Heart left ventricle (tissue), 16 donors: ENCODE measurements at regions of chr1 and their contacts with region 1.

Region 1: DNA sequence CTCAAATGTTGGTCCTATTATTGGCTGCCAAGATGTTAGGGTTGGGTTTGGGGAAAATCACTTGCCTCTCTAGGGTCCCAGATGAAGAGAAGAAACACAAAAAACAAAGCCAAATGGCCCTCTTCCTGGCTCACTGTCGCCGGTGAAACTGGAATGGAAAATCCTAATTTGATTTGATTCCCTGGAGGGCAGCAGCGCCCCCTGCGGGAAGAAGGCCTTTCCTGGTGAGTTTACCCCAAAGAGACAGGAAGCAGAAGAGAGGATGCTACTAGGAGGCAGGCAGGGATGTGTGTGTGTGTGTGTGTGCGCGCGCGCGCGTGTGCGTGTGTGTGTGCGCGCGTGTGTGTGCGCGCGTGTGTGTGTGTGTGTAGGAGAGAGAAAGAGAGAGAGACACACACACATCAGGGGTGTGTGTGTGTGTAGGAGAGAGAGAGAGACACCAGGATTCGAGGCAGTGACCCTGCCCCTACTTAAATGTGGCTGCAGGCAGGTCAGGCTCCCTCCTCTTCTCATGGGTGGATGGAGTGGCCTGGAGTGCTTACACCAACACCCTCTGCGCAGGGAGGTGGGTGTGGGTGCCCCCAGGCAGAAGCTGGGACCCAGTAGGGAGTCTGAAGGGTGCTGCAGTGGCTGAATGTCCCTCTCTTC is 3.1 kb upstream of the SELENON start:
- DNase-seq: peak; percentile 78 to 91 (median 84)
- ATAC-seq: peak; percentile 20 to 48 (median 38)
- H3K4me3 ChIP-seq: no peak overlapping the region
- H3K27ac ChIP-seq: peak overlapping the region in 7 of 12 donors; percentile 22 to 69 (median 41)
- H3K4me1 ChIP-seq: peaks cover 3 to 48% (median 32%) of the 10 kb centered on the region in 12 donors
- H3K27me3 ChIP-seq: no peaks in the 10 kb centered on the region
- CTCF ChIP-seq: peak; percentile 76 to 85 (median 78)
- POLR2A ChIP-seq: no peak

Region 2: GRCh38 chr1:25425098-25426085 is 371.5 kb before region 1 on chr1:
- intact Hi-C with region 1: loop called in 2 of 10 experiments (anchors 10 kb)
- DNase-seq: no peak
- ATAC-seq: no peak
- H3K4me3 ChIP-seq: no peak overlapping the region
- H3K27ac ChIP-seq: no peak overlapping the region
- H3K4me1 ChIP-seq: peaks cover 0 to 12% (median 5%) of the 10 kb centered on the region in 12 donors
- H3K27me3 ChIP-seq: no peaks in the 10 kb centered on the region
- CTCF ChIP-seq: no peak
- POLR2A ChIP-seq: no peak

Region 3: DNA sequence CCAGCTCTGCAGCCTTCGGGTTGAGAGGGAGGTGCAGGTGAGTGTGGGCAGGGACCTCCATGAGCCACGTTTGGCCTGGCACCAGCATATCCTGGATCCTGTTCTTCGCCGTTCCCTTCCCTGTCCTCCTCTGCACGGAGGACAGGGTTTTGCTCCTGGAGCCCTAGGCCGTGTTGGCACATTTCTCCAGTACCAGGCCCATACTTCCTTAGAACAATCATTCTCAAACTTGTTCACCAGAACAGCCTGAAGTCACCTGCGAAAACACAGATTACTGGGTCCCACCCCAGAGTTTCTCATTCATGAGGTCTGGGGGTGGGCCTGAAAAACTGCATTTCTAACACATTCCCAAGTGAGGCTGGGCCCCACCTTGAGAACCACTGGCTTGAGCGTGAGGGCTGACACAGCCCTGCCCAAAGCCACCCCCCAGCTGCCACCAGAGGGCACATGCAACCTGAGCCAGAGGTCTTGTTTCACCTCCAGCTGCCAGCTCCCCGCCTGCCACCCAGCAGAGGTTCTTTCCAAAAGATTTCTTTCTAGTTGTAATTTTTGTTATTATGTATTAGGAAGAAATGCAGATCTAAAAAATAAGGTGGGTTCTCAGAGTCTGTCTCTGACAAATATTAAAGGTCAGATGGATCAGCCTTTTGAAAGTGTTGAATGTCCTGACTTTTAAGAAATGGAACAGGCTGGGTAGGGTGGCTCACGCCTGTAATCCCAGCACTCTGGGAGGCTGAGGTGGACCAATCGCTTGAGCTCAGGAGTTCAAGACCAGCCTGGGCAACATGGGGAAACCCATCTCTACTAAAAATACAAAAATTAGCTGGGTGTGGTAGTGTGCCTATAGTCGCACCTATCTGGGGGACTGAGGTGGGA is 293.1 kb before region 1 on chr1:
- intact Hi-C with region 1: loop called in 3 of 10 experiments (anchors 5 to 10 kb)
- DNase-seq: peak in 4 of 5 donors; percentile 24 to 65 (median 54)
- ATAC-seq: peak; percentile 62 to 87 (median 85)
- H3K4me3 ChIP-seq: no peak overlapping the region
- H3K27ac ChIP-seq: no peak overlapping the region
- H3K4me1 ChIP-seq: peaks cover 0 to 42% (median 10%) of the 10 kb centered on the region in 12 donors
- H3K27me3 ChIP-seq: no peaks in the 10 kb centered on the region
- CTCF ChIP-seq: peak; percentile 40 to 69 (median 52)
- POLR2A ChIP-seq: no peak

Region 4: DNA sequence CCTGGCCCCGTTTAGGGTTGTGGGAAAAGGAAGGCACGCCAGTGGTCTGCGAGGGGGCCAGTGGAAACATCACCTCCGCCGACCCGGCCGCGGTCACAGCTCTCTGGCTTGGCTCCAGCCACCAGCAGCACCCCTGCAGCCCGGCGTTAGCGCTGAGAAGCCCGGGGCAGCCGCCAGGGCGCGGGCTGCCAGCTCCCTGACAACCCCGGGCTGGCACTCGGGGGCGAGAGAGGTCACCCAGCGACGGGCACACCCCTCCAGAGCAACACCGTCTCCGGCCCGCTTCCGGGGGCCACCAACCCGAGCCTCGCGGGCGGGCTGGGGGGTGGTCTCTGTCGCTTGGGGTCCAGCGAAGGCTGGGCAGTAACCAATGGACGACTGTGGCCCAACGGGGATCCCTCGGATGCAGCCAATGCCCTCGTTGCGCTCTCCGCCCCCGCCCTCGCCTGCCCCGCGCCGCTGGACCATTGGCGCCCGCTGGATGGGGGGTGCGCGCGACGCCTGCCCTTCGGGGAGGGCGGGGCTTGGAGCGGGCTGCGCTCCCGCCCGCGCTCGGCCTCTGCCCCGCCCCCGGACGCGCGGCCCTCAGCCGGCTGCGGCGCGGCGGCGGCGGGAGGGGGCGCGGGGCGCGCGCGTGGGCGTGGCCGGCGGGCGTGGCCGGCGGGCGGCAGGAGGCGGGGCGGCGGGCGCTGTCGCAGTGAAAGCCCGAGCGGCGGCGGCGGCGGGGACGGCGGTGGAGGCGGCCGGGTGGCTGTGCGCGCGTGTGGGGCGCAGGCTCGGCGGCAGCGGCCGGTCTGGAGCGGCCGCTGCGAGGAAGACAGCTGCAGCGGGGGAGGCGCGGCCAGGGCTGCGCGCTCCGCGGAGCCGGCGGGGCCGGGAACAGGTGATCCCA is 180.6 kb before region 1 on chr1 and contains the start of gene MAN1C1:
- intact Hi-C with region 1: loop called in 4 of 10 experiments (anchors 2 to 5 kb)
- DNase-seq: peak; percentile 91 to 95 (median 94)
- ATAC-seq: peak; percentile 90 to 93 (median 92)
- H3K4me3 ChIP-seq: peak within 1 kb of the TSS; percentile 53 to 98 (median 88)
- H3K27ac ChIP-seq: peak within 1 kb of the TSS; percentile 74 to 94 (median 87)
- H3K4me1 ChIP-seq: peaks cover 0 to 53% (median 38%) of the 10 kb centered on the region in 12 donors
- H3K27me3 ChIP-seq: no peaks in the 10 kb centered on the region
- CTCF ChIP-seq: peak; percentile 23 to 66 (median 46)
- POLR2A ChIP-seq: peak in 1 of 2 donors; percentile 64
- total RNA-seq, gene MAN1C1: 10.5 to 25.7 (median 14.8) TPM

Region 5: DNA sequence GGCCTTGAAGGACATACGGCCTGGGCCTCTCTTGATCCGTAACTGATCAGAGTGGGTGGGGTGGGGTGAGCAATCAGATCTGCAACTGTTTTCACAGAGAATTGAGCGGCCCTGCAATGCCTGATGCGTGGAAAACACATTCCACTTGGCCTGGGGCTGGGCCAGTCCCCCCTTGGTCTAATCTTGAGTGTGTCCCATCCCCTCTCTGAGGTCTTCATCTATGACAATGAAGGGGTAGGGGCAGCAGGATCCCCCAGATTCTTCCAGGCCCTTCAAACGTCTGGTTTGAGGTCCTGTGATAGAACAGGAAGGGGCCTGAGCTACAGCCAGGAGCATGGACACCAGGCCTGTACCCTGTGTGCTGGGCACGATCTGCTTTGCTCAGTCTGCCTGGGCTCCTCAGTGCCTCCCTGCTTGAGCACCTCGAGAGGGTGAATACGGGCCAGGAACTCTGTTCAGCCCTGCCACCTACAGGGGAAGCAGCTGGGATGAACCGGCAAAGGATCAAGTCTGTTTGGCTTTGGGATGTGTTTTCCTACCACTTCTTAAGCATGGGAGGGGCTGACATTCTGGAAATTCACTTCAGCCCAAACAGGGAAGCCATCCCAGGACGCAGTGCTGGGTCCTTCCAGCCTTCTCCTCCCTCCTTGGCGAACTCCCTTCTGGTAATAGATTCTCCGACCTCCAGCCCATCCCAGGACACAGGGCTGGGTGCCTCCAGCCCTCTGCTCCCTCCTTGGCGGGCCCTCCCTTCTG is 52.9 kb before region 1 on chr1:
- intact Hi-C with region 1: loop called in 4 of 10 experiments (anchors 2 to 10 kb)
- DNase-seq: peak; percentile 76 to 88 (median 79)
- ATAC-seq: peak; percentile 86 to 91 (median 88)
- H3K4me3 ChIP-seq: no peak overlapping the region
- H3K27ac ChIP-seq: peak overlapping the region; percentile 81 to 99 (median 92)
- H3K4me1 ChIP-seq: peaks cover 0 to 39% (median 28%) of the 10 kb centered on the region in 12 donors
- H3K27me3 ChIP-seq: no peaks in the 10 kb centered on the region
- CTCF ChIP-seq: peak; percentile 27 to 73 (median 53)
- POLR2A ChIP-seq: no peak